HEK293 (cell line): ENCODE measurements at regions of chr6 and their contacts with region 1.

Region 1: GRCh38 chr6:8102122-8102958 is at the start of gene EEF1E1:
- H3K4me3 ChIP-seq: peak within 1 kb of the TSS; percentile 71
- H3K27ac ChIP-seq: peak within 1 kb of the TSS; percentile 77
- H3K4me1 ChIP-seq: peaks cover 3% of the 10 kb centered on the region; the same call in 1 of the 2 replicates
- CTCF ChIP-seq: no peak

Region 2: DNA sequence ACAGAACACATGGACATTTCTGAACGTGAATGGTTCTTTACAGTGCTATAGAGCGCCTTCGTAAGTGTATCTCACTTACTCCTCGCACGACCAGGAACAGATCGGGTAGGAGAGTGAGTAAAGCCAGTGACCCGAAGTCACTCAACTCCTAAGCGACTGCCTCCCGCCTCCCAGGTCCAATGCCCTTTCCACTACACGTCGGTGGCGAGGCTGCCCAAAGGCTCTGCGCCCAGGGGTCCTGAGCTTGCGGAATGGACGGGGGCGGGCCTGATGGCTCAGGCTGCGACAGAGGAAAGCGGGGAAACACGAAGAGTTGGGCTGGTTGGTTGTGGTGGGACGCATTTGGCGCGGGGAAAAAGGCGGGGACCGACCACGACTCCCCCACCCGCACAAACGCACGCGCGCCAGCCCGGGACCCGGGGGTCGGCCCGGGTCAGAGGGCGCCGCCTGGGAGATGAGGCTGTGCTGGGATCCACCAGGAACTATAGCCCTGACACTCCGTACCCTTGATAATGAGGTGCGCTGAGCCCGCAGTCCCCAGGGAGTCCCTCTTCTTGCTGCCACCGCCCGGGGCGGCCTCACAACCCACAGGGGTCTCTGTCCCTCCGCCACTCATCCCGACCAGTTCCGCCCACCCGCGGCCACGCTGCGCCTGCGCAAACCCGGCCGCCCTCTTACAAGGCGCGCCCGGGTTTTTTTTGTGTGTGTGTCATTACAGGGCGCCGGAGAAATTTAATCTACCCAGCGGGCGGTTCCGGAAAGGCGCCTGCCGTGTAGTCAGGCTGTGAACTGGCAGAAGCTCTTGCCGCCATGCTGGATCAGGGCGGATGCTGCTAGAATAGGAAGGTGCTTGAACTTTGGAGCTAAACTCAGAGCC is 38.3 kb before region 1 on chr6 and contains the start of gene BLOC1S5:
- CTCF ChIA-PET with region 1: interaction called, 3 read pairs
- POLR2A ChIA-PET with region 1: interaction called, 37 read pairs
- H3K4me3 ChIP-seq: peak within 1 kb of the TSS; percentile 64
- H3K27ac ChIP-seq: peak within 1 kb of the TSS; percentile 56; the same call in 1 of the 2 replicates
- H3K4me1 ChIP-seq: peaks cover 3% of the 10 kb centered on the region
- CTCF ChIP-seq: peak; percentile 73

Region 3: GRCh38 chr6:8085053-8085511 is 17.3 kb before region 1 on chr6:
- CTCF ChIA-PET with region 1: interaction called, 3 read pairs
- POLR2A ChIA-PET with region 1: interaction called, 19 read pairs
- H3K4me3 ChIP-seq: no peak overlapping the region
- H3K27ac ChIP-seq: no peak overlapping the region
- H3K4me1 ChIP-seq: peaks cover 21% of the 10 kb centered on the region
- CTCF ChIP-seq: no peak